Transverse colon (tissue), 4 donors: ENCODE measurements at regions of chr6 and their contacts with region 1.

Region 1: DNA sequence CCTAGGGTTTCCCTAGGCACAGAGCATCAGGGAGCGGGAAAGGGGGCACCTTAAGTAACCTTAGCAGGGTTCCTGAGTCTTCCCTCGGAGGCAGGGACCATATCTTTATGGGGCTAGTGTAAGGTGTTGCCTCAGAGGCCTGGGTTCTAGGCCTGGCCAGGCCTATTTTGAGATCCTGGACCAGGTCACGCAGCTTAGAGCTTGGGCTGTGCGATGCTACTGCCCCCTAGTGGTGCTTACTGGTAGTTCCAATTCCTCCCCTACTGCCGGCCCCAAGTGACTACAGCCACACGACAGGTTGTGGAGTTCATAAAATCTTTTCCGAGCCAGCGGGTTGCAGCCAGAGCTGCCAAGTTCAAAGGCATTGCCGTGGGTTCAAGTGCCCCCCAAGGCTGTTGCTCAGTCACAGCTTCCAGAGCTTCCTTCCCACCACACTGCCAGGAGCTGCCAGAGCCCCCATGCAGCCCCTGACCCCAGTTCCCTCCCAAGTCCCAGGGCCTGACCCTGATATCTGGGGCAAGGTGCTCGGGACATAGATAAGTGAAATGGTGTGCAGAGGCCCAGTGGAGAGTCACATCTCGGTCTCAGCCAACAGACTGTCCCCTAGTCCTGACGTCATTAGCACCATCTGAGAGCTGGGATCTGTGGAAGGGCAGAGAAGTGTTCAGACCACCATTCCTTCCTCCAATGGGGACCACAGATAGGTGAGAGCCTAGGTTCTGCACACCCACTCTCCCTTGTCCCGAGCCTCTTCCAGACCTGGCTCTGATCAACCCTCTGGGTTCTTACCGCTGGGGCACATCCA is 3.3 kb downstream of the LRRC73 start:
- DNase-seq: peak; percentile 83
- H3K4me3 ChIP-seq: no peak overlapping the region
- H3K27ac ChIP-seq: no peak overlapping the region
- H3K4me1 ChIP-seq: peaks cover 5 to 28% (median 26%) of the 10 kb centered on the region in 4 donors
- H3K27me3 ChIP-seq: peaks cover 16% of the 10 kb centered on the region
- CTCF ChIP-seq: peak; percentile 94 to 98 (median 98)
- EP300 ChIP-seq: no peak
- POLR2A ChIP-seq: no peak

Region 2: DNA sequence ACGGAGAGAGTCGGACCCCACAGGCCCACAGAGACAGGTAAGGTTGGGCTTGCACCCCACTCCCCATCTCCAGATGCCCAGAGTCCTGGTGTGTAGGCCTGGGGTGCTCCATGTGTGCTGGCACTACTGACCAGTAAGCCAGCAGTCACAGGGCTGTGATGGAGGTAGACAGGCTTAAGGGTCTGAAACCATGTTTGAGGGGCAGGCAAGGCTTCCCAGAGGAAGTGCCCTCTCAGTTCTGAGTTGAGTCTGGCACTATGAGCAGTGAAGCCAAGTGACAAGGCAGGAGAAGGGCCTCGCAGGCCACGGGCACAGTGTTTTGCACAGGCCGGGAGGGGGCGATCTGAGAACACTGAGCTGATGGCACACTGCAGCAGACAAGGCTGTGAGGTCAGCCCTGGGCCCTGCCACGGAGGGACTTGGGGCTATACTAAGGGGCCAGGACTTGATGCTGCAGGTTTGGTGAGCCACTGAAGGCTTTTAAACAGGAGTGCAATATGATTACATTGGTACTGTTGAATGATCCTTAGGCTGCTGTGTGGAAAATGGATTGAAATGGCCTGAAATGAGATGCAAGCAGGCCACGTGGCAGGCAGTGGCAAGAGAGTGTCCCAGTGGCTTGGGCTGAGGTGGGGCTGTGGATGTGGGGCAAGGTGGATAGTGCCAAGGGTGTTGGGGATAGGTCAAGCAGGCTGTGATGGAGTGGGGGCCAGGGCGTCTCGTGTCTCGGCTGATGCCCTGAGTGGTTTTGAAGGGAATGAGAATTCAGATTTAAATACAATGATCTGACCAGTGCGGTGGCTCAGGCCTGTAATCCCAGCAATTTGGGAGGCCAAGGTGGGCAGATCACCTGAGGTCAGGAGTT is 243.3 kb before region 1 on chr6:
- in situ Hi-C with region 1: no loop called
- intact Hi-C with region 1: loop called (anchors 5 kb)
- DNase-seq: peak; percentile 88
- H3K4me3 ChIP-seq: no peak overlapping the region
- H3K27ac ChIP-seq: no peak overlapping the region
- H3K4me1 ChIP-seq: peaks cover 10 to 16% (median 15%) of the 10 kb centered on the region in 4 donors
- H3K27me3 ChIP-seq: no peaks in the 10 kb centered on the region
- CTCF ChIP-seq: peak; percentile 73 to 89 (median 79)
- EP300 ChIP-seq: no peak
- POLR2A ChIP-seq: no peak

Region 3: DNA sequence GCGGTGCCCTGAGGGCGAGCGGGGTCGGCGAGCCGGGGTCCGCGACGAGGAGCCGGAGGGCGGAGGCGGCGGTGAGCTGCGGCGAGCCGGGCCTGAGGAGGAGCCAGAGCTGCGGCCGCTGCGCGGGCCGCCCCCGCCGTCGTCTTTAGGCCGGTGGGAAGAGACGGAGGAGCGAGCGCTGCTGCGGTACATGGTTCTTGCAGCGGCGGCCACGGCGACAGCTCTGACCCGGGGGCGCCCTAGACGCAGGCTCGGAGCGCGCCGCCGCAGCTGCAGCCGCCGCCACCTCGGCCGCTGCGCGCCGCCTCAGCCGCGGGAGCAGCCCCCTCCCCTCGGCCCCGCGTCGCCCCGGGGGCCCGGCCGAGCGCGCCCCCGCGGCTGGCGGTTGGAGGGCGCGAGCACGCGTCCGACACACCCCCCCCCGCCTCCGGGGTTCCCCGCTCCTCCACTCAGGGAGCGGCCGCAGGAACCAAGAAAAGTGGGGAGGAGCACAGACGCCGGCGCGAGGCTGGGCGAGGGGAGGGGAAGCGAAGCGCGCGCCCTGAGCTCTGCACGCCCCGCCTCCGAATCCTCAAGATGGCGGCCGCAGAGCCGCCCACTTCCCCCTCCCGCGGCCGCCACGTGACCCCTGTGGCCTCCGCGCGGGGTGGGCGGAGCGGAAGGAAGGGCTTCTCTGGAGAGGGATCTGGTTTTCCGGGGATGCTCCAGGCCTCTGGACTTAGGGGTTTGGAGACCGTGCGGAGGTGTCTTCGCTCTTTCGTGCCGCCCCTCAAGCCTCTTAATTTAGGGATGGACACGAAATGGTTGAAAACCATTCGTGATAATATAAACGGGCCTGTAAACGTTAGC is 137.5 kb before region 1 on chr6 and contains the start of gene ZNF318:
- in situ Hi-C with region 1: no loop called
- intact Hi-C with region 1: loop called (anchors 10 kb)
- DNase-seq: peak; percentile 97
- H3K4me3 ChIP-seq: peak within 1 kb of the TSS; percentile 19 to 96 (median 86)
- H3K27ac ChIP-seq: peak within 1 kb of the TSS; percentile 83 to 95 (median 92)
- H3K4me1 ChIP-seq: peaks cover 4 to 30% (median 15%) of the 10 kb centered on the region in 4 donors
- H3K27me3 ChIP-seq: no peaks in the 10 kb centered on the region
- CTCF ChIP-seq: no peak
- EP300 ChIP-seq: peak; percentile 7
- POLR2A ChIP-seq: peak; percentile 42
- total RNA-seq, gene ZNF318: 13.0 to 17.5 (median 15.4) TPM

Region 4: GRCh38 chr6:43454696-43455530 is 52.0 kb before region 1 on chr6:
- in situ Hi-C with region 1: loop called in 1 of 4 experiments (anchors 5 kb)
- intact Hi-C with region 1: loop called (anchors 5 kb)
- DNase-seq: peak; percentile 85
- H3K4me3 ChIP-seq: peak overlapping the region; percentile 26 to 69 (median 47)
- H3K27ac ChIP-seq: peak overlapping the region in 1 of 4 donors; percentile 9
- H3K4me1 ChIP-seq: peaks cover 0 to 19% (median 17%) of the 10 kb centered on the region in 4 donors
- H3K27me3 ChIP-seq: peaks cover 51% of the 10 kb centered on the region
- CTCF ChIP-seq: peak in 1 of 5 experiments; percentile 47
- EP300 ChIP-seq: no peak
- POLR2A ChIP-seq: no peak

Region 5: DNA sequence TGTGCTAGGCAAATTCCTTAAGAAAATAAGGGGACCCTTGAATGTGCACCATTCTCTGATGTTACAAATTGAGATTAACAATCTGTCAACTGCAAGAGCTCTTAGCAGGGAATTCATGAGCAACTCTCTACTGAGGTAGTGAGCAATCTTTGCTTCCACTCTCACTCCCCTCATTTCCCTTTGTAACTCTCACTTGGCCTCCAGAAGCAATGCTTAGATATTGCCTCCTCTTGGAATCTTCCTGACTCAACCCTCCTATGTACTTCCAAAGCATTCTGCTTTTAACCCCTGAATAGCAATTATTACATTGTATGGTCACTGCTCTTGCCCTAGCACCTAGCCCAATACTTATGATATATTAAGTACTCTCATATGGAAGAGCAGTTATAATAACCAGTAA is 52.5 kb after region 1 on chr6:
- in situ Hi-C with region 1: no loop called
- intact Hi-C with region 1: no loop called
- DNase-seq: no peak
- H3K4me3 ChIP-seq: no peak overlapping the region
- H3K27ac ChIP-seq: no peak overlapping the region
- H3K4me1 ChIP-seq: no peaks in the 10 kb centered on the region
- H3K27me3 ChIP-seq: no peaks in the 10 kb centered on the region
- CTCF ChIP-seq: no peak
- EP300 ChIP-seq: no peak
- POLR2A ChIP-seq: no peak